ENCODE measurements at regions of chr2 and their contacts with region 1.

Region 1: GRCh38 chr2:223970343-223971128 is 13.3 kb downstream of the MRPL44 start:
- DNase-seq: no peak
- ATAC-seq: peak; percentile 87
- H3K4me3 ChIP-seq: no peak overlapping the region
- H3K27ac ChIP-seq: no peak overlapping the region
- H3K4me1 ChIP-seq: no peaks in the 10 kb centered on the region
- H3K27me3 ChIP-seq: no peaks in the 10 kb centered on the region
- CTCF ChIP-seq: peak; percentile 73 to 91 (median 85); a peak in 5 of 6 replicates
- EP300 ChIP-seq: no peak
- POLR2A ChIP-seq: no peak
- RAD21 ChIP-seq: peak; percentile 84

Region 2: GRCh38 chr2:223598994-223599639 is 371.4 kb before region 1 on chr2:
- CTCF ChIA-PET with region 1: no interaction called
- POLR2A ChIA-PET with region 1: no interaction called
- RAD21 ChIA-PET with region 1: no interaction called
- SMC1A ChIA-PET with region 1: no interaction called
- in situ Hi-C with region 1: no loop called
- intact Hi-C with region 1: no loop called
- DNase-seq: no peak
- ATAC-seq: no peak
- H3K4me3 ChIP-seq: no peak overlapping the region
- H3K27ac ChIP-seq: no peak overlapping the region
- H3K4me1 ChIP-seq: no peaks in the 10 kb centered on the region
- H3K27me3 ChIP-seq: no peaks in the 10 kb centered on the region; a peak in 1 of 4 replicates
- CTCF ChIP-seq: no peak
- EP300 ChIP-seq: no peak
- POLR2A ChIP-seq: no peak
- RAD21 ChIP-seq: no peak

Region 3: DNA sequence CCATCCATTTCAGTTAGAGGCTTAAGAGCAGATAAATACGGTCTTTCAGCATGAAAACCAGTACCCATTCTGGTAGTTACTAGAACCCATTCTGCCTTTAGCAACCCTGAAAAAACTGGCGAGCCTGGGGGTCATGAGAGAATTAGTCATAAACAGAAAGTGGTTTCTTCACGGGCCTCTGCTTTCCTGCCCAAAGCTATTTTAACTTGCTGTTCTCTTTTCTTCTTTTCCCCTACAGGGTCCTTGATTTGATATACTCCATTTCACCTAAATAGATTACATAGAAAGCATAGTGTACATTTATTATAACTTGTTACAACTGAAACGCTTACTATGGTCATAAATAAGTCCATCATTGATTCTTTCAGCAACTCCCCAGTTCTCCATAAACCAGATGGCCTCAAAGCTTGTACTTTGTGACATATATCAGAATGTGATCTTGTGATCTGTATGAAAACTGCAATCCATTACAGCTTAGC is 73.7 kb before region 1 on chr2:
- CTCF ChIA-PET with region 1: interaction called, 14 read pairs
- POLR2A ChIA-PET with region 1: interaction called, 8 read pairs
- RAD21 ChIA-PET with region 1: interaction called, 4 read pairs
- SMC1A ChIA-PET with region 1: interaction called, 6 read pairs
- in situ Hi-C with region 1: no loop called
- intact Hi-C with region 1: no loop called
- DNase-seq: peak; percentile 89
- ATAC-seq: peak; percentile 83
- H3K4me3 ChIP-seq: no peak overlapping the region
- H3K27ac ChIP-seq: peak overlapping the region; percentile 82
- H3K4me1 ChIP-seq: peaks cover 45% of the 10 kb centered on the region
- H3K27me3 ChIP-seq: no peaks in the 10 kb centered on the region
- CTCF ChIP-seq: no peak
- EP300 ChIP-seq: peak; percentile 79 to 87
- POLR2A ChIP-seq: no peak
- RAD21 ChIP-seq: no peak

Region 4: GRCh38 chr2:223957092-223957851 is 13.3 kb before region 1 on chr2 and contains the start of gene MRPL44:
- CTCF ChIA-PET with region 1: interaction called, 74 read pairs
- POLR2A ChIA-PET with region 1: interaction called, 4 read pairs
- RAD21 ChIA-PET with region 1: interaction called, 25 read pairs
- SMC1A ChIA-PET with region 1: interaction called, 37 read pairs
- in situ Hi-C with region 1: no loop called
- intact Hi-C with region 1: no loop called
- DNase-seq: peak; percentile 76
- ATAC-seq: peak; percentile 99
- H3K4me3 ChIP-seq: peak within 1 kb of the TSS; percentile 87
- H3K27ac ChIP-seq: peak within 1 kb of the TSS; percentile 87
- H3K4me1 ChIP-seq: peaks cover 24% of the 10 kb centered on the region
- H3K27me3 ChIP-seq: no peaks in the 10 kb centered on the region
- CTCF ChIP-seq: no peak
- EP300 ChIP-seq: no peak
- POLR2A ChIP-seq: peak; percentile 96
- RAD21 ChIP-seq: no peak
- polyA plus RNA-seq, gene MRPL44: 18.3 to 22.0 TPM

Region 5: DNA sequence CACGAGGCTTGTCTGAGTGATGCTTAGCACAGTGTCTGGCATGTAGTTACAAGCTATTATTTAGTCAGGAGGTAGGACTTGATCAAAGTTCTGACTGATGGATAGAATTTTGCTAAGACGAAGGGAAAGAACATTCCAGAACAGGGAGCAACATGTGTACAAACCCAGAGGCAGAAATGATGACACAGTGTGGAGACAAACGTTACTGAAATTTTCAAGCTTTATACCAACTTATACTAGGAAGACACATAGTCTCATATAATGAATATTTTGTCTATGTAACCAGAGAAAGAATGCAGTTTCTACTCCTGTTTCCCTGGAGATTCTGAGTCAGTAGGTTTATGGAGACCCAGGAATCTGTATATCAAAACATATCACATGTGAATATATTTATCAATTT is 308.0 kb after region 1 on chr2:
- CTCF ChIA-PET with region 1: interaction called, 187 read pairs
- POLR2A ChIA-PET with region 1: no interaction called
- RAD21 ChIA-PET with region 1: interaction called, 82 read pairs
- SMC1A ChIA-PET with region 1: interaction called, 74 read pairs
- in situ Hi-C with region 1: no loop called
- intact Hi-C with region 1: no loop called
- DNase-seq: no peak
- ATAC-seq: no peak
- H3K4me3 ChIP-seq: no peak overlapping the region
- H3K27ac ChIP-seq: no peak overlapping the region
- H3K4me1 ChIP-seq: no peaks in the 10 kb centered on the region
- H3K27me3 ChIP-seq: no peaks in the 10 kb centered on the region; a peak in 3 of 4 replicates
- CTCF ChIP-seq: no peak
- EP300 ChIP-seq: no peak
- POLR2A ChIP-seq: no peak
- RAD21 ChIP-seq: no peak

Region 6: GRCh38 chr2:224284134-224284946 is 313.8 kb after region 1 on chr2:
- CTCF ChIA-PET with region 1: interaction called, 187 read pairs
- POLR2A ChIA-PET with region 1: no interaction called
- RAD21 ChIA-PET with region 1: interaction called, 82 read pairs
- SMC1A ChIA-PET with region 1: interaction called, 74 read pairs
- in situ Hi-C with region 1: no loop called
- intact Hi-C with region 1: loop called (anchors 1 kb)
- DNase-seq: no peak
- ATAC-seq: peak; percentile 52
- H3K4me3 ChIP-seq: no peak overlapping the region
- H3K27ac ChIP-seq: no peak overlapping the region
- H3K4me1 ChIP-seq: no peaks in the 10 kb centered on the region
- H3K27me3 ChIP-seq: no peaks in the 10 kb centered on the region; a peak in 1 of 4 replicates
- CTCF ChIP-seq: peak; percentile 32 to 50 (median 45); a peak in 4 of 6 replicates
- EP300 ChIP-seq: no peak
- POLR2A ChIP-seq: no peak
- RAD21 ChIP-seq: peak; percentile 68

Region 7: DNA sequence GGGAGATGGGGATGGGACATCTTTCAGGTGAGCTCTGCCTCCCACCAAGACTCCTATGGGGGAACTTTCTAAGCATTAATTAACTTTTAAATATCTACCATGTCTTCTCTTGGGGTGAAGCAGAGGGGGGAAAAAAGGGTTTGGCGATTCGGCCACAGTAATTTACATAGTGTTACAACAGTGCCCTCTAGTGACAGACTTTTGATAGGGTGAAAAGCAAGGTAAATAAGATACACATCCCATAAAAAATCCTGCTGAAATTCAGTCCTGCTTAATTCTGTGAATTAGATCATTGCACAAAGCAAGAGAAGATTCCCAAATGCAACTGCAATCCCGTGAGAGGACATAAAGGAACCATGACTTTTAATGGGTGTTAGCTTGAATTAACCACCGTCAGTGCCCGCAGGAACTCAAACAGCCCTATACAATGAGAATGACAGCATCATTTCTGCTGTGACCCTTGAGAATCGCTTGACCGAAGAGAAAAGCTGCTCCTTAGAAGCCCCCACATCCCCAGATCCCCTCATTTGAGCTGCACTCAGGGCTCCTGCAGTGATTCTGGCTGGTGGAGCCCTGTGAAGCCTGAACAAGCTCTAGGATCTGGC is 398.6 kb after region 1 on chr2:
- CTCF ChIA-PET with region 1: interaction called, 14 read pairs
- POLR2A ChIA-PET with region 1: no interaction called
- RAD21 ChIA-PET with region 1: interaction called, 3 read pairs
- SMC1A ChIA-PET with region 1: no interaction called
- in situ Hi-C with region 1: no loop called
- intact Hi-C with region 1: loop called (anchors 5 kb)
- DNase-seq: no peak
- ATAC-seq: peak; percentile 78
- H3K4me3 ChIP-seq: no peak overlapping the region
- H3K27ac ChIP-seq: no peak overlapping the region
- H3K4me1 ChIP-seq: no peaks in the 10 kb centered on the region
- H3K27me3 ChIP-seq: no peaks in the 10 kb centered on the region
- CTCF ChIP-seq: peak; percentile 39 to 61 (median 48); a peak in 5 of 6 replicates
- EP300 ChIP-seq: no peak
- POLR2A ChIP-seq: no peak
- RAD21 ChIP-seq: peak; percentile 39

Region 8: GRCh38 chr2:224778474-224778877 is 807.9 kb after region 1 on chr2:
- CTCF ChIA-PET with region 1: interaction called, 3 read pairs
- POLR2A ChIA-PET with region 1: no interaction called
- RAD21 ChIA-PET with region 1: interaction called, 3 read pairs
- SMC1A ChIA-PET with region 1: no interaction called
- in situ Hi-C with region 1: no loop called
- intact Hi-C with region 1: loop called (anchors 10 kb)
- DNase-seq: peak; percentile 39
- ATAC-seq: peak; percentile 91
- H3K4me3 ChIP-seq: no peak overlapping the region
- H3K27ac ChIP-seq: no peak overlapping the region
- H3K4me1 ChIP-seq: no peaks in the 10 kb centered on the region
- H3K27me3 ChIP-seq: no peaks in the 10 kb centered on the region
- CTCF ChIP-seq: peak; percentile 67 to 79 (median 77)
- EP300 ChIP-seq: no peak
- POLR2A ChIP-seq: no peak
- RAD21 ChIP-seq: peak; percentile 82

Measured in GM12878 (cell line).